ENCODE measurements at regions of chr2 and their contacts with region 1.

Region 1: GRCh38 chr2:27370026-27370815 is at the starts of genes EIF2B4 and SNX17:
- DNase-seq: peak; percentile 99
- ATAC-seq: peak; percentile 97
- total RNA-seq, gene EIF2B4: 40.3 TPM
- total RNA-seq, gene SNX17: 57.6 TPM

Region 2: DNA sequence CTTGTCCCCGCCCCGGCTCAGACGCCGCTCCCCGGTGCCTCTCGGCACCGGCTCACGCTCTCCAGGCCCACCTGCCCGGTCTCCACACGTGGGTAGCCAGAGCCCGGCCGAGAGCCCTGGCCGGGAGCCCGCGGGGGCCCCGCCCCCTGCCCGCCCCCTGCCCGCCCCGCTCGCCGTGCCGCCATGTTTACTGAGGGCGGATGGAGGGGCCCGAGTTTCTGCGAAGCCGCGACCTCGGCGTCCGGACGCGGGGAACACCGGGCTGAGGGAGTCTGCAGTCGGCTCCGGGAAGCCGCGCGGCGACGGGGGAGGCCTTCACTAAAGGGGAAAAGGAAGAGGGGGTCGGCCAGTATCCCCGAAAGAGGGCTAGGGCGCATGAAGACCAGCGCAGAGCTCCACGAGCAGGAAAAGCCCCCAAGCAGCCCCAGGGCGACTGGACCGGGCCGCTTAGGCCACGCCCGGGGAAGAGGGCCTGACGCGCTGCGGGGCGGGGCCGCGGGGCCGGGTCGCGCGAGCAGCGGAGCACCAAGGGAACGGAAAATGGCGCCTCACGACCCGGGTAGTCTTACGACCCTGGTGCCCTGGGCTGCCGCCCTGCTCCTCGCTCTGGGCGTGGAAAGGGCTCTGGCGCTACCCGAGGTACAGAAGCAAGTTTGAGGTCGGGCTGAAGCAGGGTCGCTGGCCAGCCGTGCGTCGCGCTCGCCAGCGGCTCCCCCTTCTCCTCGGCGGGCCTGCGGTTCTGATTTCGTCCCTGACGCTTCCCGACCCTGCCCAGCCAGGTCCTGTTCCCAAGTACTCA is 158.2 kb before region 1 on chr2 and contains the starts of genes ATRAID and SLC5A6:
- intact Hi-C with region 1: loop called (anchors 5 kb)
- DNase-seq: peak; percentile 95
- ATAC-seq: peak; percentile 98
- total RNA-seq, gene ATRAID: 115 TPM
- total RNA-seq, gene SLC5A6: 12.3 TPM

Region 3: DNA sequence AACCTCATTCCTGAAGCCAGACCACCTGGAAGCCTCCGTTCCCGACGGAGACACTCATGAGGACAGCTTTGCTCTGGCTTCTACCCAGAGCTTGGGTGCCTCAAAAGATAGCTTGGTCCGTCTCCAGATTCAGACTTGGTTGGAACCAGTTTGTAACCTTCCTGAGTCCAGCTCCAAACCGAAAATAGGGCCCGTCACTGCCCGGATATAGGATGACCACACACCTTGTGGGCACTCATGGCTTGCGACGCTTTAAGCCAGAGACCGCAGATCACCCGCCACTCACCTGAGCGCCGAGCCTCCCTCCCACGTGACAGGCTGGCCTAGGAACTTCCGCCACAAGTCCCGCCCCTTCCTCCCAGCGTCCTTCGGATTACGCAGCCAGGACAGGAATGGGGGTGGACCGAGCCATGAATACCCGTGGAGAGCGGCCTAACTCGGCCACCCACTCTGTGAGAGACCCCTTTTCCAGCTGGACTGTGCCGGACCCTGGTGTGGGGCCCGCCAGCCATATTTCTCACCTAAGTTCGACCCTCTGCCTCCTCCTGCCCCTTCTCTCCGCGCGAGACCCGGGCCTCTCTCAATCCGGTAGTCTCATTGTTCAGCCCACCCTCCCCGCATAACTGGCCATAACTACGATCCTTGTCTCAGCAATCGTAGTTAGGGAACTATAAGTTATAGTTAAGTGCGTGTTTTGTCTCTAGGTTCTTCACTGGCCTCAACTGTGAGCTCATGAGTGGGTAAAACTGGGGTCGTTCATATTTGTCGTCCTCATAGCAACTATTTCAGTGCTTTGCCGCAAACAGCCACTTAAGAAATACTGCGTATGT is 47.2 kb before region 1 on chr2 and contains the start of gene MPV17:
- intact Hi-C with region 1: loop called (anchors 2 kb)
- DNase-seq: peak; percentile 95
- ATAC-seq: peak; percentile 96
- total RNA-seq, gene MPV17: 48.0 TPM

Region 4: DNA sequence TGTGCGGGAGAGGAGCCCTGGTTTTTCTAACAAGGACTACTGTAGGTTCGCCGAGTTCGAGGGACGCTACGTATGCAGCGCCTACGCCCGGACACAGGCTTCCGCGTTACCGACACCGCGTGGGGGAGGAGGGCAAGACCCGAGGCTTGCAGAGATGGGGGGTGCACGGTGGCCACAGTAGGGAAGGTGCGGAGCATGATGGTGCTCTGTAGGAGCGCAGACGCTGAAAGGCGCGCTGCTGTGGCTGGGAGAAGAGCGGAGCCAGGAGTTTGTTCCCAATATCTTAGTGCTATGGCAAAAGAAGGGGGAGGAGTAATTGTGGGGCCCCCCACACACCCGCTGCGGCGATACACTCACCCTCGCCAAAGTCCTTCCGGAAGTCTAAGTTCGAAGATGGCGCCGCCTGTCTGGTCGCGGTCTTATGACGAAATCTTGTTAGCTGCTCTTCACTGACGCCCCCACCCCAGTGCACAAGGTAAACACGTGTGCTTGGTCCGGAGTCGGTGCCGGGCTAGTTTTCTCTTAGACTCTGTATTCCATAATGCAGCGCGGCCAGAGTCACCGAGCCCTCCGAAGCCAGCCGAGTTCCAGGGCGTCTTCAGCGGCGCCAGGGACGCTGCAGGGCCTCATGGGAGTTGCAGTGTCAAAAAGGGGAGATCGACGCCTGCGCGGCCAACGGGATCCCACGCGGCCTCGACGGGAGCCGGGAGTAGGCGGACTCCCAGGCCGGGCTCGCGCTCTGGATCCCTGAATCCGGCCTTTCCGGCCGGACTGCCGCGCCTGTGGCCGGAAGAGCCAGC is 13.6 kb before region 1 on chr2 and contains the start of gene GTF3C2:
- intact Hi-C with region 1: loop called (anchors 2 kb)
- DNase-seq: peak; percentile 97
- ATAC-seq: peak; percentile 97
- total RNA-seq, gene GTF3C2: 17.3 TPM

Region 5: GRCh38 chr2:27409321-27410073 is 39.3 kb after region 1 on chr2 and contains the start of gene PPM1G:
- intact Hi-C with region 1: loop called (anchors 2 kb)
- DNase-seq: peak; percentile 97
- ATAC-seq: peak; percentile 100
- total RNA-seq, gene PPM1G: 35.6 TPM

Region 6: DNA sequence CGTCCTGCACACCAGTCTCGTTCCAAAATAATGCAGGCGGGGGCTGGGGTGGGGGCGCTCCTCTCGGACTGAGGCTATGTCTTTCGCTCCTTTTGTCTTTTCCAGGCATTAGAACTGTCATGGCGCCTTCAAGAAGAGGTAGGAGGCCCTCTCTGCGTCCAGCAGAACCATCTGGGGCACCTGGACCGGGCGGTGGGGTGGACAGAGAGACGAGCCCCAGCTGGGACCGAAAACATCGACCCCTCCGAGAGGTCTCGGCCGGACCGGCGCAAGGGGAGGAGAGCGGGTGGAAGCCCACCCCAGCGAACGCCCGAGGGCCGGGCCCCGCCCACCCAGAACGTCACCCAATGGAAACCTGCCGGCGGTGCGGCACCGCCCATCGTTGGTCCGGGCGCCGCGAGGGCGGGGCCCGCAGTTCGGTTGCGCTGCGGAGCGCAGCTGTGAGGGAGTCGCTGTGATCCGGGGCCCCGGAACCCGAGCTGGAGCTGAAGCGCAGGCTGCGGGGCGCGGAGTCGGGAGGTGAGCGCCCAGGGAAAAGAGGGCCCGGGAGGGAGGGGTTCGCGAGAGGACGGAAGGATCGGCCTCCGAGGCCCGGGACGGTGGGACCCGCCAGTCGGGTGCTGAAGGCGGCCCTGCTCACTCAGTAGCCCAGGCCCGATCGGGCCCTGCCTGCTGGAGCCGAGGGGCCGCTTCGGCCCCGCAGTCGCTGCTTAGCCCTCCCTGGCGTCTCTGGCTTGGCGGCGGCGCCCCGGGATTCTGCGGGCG is 58.2 kb after region 1 on chr2 and contains the start of gene NRBP1:
- intact Hi-C with region 1: loop called (anchors 5 kb)
- DNase-seq: peak; percentile 96
- ATAC-seq: peak; percentile 98
- total RNA-seq, gene NRBP1: 58.4 TPM